ENCODE measurements at regions of chr9 and their contacts with region 1.

Region 1: GRCh38 chr9:116149844-116150243 is 3.7 kb upstream of the PAPPA start:
- H3K4me3 ChIP-seq: no peak overlapping the region
- H3K27ac ChIP-seq: no peak overlapping the region
- H3K4me1 ChIP-seq: no peaks in the 10 kb centered on the region
- CTCF ChIP-seq: no peak

Region 2: GRCh38 chr9:115883457-115884329 is 266.2 kb before region 1 on chr9:
- CTCF ChIA-PET with region 1: interaction called, 26 read pairs
- POLR2A ChIA-PET with region 1: no interaction called
- H3K4me3 ChIP-seq: no peak overlapping the region
- H3K27ac ChIP-seq: no peak overlapping the region
- H3K4me1 ChIP-seq: no peaks in the 10 kb centered on the region
- CTCF ChIP-seq: peak; percentile 36; the same call in 1 of the 2 replicates

Region 3: GRCh38 chr9:116005205-116005604 is 144.6 kb before region 1 on chr9:
- CTCF ChIA-PET with region 1: no interaction called
- POLR2A ChIA-PET with region 1: no interaction called
- H3K4me3 ChIP-seq: no peak overlapping the region
- H3K27ac ChIP-seq: no peak overlapping the region
- H3K4me1 ChIP-seq: no peaks in the 10 kb centered on the region
- CTCF ChIP-seq: no peak

Region 4: DNA sequence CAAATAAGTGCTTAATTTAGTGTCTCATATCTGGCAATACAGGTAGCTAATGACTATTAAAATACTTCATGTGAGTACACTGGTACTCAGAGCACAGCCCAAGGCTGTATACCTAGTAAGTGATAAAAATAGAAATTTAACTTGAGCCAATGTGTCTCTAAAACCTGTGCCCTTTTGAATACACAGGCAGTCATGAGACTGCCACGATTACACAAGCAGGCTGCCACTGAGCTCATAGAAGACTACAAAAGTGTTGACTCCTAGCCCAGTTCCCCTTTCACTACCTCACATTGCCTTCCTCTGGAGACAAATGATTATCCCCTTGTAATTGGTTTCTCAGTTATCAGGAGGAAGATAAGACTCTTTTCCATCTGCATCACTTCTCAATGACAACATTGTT is 62.6 kb before region 1 on chr9:
- CTCF ChIA-PET with region 1: no interaction called
- POLR2A ChIA-PET with region 1: no interaction called
- H3K4me3 ChIP-seq: no peak overlapping the region
- H3K27ac ChIP-seq: no peak overlapping the region
- H3K4me1 ChIP-seq: peaks cover 14% of the 10 kb centered on the region
- CTCF ChIP-seq: no peak

Region 5: DNA sequence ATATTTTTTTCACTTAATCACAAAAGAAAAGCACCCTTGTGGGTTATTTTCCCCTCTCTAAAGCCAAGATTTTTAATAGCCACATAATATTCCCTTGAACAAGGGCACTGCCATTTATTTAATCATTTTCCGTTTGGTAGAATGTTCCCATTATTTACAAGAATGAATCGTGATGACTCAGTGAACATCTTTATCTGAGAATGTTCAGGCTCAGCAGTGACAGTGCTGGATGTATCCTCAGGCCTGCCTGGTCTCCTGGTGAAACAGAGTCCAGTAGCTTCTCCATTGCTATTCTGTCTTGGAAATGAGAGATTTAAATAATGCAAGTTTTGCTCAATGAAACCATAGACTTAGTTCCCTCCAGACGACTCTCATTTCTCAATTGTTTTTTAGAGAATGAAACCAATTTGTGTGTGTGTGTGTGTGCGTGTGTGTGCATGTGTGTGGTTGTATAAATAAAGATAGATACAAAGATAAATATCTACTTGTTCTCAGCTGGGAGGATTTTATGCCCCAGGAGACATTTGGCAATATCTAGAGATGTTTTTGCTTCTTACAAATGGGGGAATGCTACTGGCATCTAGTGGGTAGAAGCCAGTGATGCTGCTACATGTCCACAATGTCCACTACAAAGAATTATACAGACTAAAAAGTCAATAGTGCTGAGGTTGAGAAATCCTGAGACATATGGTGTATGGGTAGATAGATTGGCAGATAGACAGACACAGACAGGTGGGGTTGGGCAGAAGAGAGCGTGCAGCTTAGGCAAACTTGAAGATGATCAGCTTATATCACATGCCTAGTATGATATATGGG is 58.8 kb after region 1 on chr9:
- CTCF ChIA-PET with region 1: interaction called, 10 read pairs
- POLR2A ChIA-PET with region 1: interaction called, 3 read pairs
- H3K4me3 ChIP-seq: no peak overlapping the region
- H3K27ac ChIP-seq: no peak overlapping the region
- H3K4me1 ChIP-seq: peaks cover 2% of the 10 kb centered on the region; the same call in 1 of the 2 replicates
- CTCF ChIP-seq: no peak

Region 6: DNA sequence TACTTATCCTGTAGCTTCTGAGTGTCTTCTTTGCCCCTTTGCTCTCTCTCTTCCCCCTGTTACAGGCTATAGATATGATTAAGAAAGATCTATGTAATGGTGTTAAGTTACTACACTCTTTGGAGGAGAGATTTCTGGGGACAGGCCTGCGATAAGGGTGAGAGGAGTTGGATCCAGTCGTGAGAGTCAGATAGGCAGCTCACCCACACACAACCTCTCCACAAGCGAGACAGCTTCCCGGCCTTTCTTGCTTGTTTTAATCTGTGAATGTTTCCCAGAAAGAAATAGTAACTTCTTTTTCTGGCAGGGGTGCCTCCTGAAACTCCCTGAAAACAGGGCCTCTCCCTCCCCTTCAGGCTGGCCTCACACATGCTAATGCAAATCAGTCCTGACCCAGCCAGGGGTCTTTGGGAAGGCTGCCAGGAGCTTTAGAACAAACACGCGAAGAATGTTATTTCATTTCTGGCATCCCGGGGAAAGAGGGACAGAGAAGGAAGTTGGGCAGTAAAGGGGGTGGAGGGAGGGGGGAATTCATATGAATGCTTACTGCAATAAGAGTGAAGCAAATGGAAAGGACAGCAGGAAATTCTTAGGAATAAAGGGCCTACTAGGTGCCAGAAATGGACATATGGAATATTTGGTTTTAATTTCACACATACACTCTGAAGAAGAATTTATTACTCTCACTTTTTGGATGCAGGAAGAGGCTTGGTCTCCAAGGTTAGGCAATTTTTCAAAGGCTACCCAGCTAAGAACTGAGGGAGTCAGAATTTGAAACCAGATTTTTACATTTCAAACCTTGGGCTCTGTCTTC is 321.5 kb after region 1 on chr9:
- CTCF ChIA-PET with region 1: interaction called, 11 read pairs
- POLR2A ChIA-PET with region 1: no interaction called
- H3K4me3 ChIP-seq: no peak overlapping the region
- H3K27ac ChIP-seq: no peak overlapping the region
- H3K4me1 ChIP-seq: no peaks in the 10 kb centered on the region
- CTCF ChIP-seq: no peak

Region 7: DNA sequence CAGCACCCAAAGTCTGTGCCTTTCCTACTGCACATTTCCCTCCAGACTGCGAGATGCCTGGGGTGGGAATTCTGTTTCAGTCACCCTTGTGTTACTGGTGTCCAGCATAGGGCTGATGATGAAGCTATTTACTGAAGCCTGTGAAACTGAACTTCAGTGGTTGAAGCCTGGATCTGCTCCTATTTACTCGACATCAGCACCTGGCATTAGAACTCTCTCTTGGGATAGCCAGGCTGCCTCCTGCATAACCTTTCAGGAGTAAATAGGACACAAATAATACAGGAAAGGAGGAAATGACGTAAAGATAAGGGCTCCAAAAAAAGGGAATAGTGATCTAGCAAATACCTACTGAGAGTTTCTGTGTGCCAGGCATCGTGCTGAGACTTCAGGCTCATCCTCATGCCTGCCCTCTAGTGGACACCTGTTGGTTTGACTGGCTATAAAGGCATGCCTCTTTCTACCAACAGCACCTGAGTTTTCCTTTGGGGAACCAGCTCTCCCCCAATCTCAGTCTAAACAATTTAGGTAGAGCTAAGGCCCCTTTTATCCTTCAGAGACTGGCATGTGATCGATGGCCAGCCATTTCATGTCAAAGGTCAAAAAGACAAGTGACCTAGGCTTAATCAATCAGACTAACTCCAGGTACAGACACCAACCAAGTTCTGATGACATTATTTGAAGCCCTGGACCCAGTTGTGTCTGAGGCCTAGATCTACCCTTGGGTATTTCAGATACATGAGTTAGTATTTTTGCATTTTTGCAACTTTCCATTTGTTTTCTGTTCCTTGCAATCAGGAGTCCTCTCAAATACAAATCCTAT is 345.2 kb after region 1 on chr9:
- CTCF ChIA-PET with region 1: interaction called, 19 read pairs
- POLR2A ChIA-PET with region 1: no interaction called
- H3K4me3 ChIP-seq: no peak overlapping the region
- H3K27ac ChIP-seq: no peak overlapping the region
- H3K4me1 ChIP-seq: no peaks in the 10 kb centered on the region
- CTCF ChIP-seq: no peak

Region 8: DNA sequence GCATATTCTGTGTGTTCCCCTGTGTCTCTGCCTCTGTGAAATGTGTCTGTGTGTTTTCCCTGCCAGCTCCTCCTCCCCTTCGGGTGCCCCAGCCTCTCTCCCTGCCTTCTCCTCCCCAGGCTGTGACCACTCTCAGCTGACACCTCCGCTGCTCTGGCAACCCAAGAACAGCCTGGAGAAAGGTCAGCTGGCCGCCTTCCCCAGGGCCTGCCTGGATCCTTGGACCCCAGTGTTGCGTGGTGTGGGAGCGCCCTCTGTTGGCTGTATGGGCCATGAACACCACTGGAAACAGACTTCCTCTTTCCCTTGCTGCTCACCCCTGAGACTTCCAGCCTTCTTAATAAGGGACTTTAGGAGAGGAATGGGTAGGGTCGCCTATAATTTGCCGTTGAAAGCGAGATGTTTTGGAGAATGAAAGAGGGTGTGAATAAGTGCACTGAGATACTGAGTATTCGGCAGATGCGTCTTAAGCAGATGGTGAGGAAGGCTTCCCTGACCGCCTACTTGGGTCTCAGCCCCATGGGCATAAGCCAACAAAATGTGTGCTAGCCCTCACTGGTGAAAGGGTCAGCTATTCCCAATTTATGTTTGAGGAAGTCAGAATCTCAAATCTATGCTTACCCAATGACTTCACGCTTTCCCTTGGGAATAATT is 422.4 kb after region 1 on chr9:
- CTCF ChIA-PET with region 1: interaction called, 17 read pairs
- POLR2A ChIA-PET with region 1: no interaction called
- H3K4me3 ChIP-seq: no peak overlapping the region
- H3K27ac ChIP-seq: no peak overlapping the region
- H3K4me1 ChIP-seq: peaks cover 4% of the 10 kb centered on the region
- CTCF ChIP-seq: peak; percentile 80